ENCODE measurements at regions of chr19 and their contacts with region 1.

Region 1: DNA sequence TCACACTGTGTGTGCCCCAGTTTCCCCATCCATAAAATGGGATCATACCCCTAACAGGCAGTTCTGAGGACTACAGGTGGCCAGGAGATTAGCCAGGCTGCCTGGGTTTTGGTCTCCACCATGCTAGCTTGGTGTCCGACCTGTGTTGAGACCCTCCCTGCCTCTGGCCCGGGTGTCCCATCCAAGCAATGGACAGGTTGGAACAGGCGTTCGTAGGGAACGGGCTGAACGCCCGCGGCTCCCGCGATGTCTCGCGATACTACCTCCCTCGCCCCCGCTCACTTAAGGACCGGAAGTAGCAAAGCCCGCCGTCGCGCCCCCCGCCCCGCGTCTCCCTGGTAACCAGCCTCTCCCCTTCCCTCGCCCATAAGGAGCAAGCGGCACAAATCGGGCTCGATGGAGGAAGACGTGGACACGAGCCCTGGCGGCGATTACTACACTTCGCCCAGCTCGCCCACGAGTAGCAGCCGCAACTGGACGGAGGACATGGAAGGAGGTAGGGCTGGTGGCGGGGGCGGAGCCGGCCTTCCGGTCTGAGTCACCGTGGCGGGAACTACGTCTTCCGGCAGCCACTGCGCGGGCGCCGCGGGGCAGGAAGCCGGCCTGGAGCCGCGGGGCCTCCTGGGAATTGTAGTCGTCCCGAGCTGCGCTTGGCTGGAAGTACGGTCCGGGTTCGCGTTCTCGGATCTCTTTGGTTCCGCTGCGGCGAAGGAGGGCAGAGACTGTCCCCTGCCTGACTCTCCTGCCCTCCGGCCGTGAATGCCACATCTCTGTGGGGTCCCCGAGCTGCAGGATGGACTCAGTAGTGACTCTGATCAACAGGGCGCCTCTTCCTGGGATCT is 45.4 kb downstream of the SMIM24 start:
- DNase-seq: peak; percentile 98
- ATAC-seq: peak; percentile 92
- H3K4me3 Mint-ChIP-seq: peak overlapping the region; percentile 99
- H3K27ac Mint-ChIP-seq: peak overlapping the region; percentile 99
- H3K4me1 Mint-ChIP-seq: peaks cover 17% of the 10 kb centered on the region
- H3K27me3 Mint-ChIP-seq: no peaks in the 10 kb centered on the region
- CTCF ChIP-seq: no peak

Region 2: DNA sequence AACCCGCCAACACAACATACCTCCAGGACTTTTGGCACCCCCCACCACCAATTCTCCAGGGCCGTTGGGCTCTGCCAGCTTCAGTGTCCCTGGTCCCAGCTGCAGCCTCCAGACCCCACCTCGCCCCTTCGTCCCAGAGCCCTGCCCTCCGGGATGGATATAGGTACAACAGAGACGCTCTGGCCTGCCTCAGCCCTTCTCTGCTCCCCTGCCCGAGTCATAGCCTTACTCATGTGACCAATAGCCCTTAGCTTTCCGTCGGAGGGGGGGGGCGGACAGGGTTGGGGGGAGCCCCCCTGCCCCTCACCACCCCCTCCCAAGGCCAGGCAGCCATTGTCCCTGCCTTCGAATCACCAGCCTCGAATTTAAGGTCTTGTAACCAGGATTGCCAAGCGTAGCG is 139.4 kb before region 1 on chr19:
- CTCF ChIA-PET with region 1: no interaction called
- POLR2A ChIA-PET with region 1: no interaction called
- intact Hi-C with region 1: no loop called
- DNase-seq: no peak
- ATAC-seq: no peak
- H3K4me3 Mint-ChIP-seq: no peak overlapping the region
- H3K27ac Mint-ChIP-seq: no peak overlapping the region
- H3K4me1 Mint-ChIP-seq: no peaks in the 10 kb centered on the region
- H3K27me3 Mint-ChIP-seq: peaks cover 17% of the 10 kb centered on the region
- CTCF ChIP-seq: no peak

Region 3: DNA sequence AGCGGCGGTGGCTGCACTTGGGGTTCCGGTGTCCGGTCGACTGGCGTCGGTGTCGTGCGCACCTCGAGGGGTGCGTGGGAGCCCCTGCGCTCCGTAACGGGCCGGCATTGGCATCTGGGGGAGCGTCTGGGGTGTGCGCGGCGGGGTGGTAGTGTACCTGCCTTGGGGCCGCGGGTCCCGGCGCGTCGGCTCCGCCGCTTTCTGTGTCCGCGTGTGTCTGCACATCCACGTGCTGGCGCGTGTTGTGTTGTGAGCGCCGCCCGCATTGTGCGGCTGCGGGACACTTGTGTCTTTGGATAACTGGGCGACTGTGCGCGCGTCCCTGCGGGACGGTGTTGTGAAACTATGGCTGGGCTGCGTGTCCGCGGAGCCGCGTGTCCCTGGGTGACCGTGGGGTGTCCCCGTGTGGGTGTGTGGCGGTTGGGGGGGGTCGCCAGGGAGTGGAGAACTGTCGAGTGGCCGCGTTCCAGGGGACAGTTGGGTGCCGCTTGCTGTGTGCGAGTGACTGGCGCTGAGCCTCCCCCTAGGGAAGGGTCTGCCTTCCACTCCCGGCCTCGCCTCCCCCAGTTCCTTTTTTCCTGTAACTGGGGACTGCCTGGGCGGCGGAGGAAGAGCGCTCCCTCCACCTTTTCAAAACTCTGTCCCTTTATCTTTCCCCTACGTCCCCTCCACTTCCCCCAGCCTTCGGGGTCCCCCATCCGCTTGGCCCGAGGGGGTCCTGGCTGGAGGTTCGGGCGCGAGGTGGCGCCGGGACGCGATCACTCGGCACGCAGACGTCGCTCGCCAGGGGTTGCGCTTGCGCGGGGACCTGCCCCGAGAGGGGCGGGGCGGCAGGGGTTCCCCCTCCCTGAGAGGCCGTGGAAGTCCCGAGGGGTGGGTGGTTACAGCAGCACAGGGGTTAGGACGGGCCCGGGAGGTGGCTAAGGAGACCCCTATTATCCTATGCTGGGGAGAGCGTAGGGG is 74.2 kb before region 1 on chr19:
- CTCF ChIA-PET with region 1: interaction called, 3 read pairs
- POLR2A ChIA-PET with region 1: no interaction called
- intact Hi-C with region 1: loop called (anchors 2 kb)
- DNase-seq: peak; percentile 80
- ATAC-seq: peak; percentile 75
- H3K4me3 Mint-ChIP-seq: peak overlapping the region; percentile 88
- H3K27ac Mint-ChIP-seq: peak overlapping the region; percentile 86
- H3K4me1 Mint-ChIP-seq: peaks cover 32% of the 10 kb centered on the region
- H3K27me3 Mint-ChIP-seq: peaks cover 9% of the 10 kb centered on the region
- CTCF ChIP-seq: no peak